Natural killer cell (primary cell): ENCODE measurements at regions of chr1 and their contacts with region 1.

Region 1: DNA sequence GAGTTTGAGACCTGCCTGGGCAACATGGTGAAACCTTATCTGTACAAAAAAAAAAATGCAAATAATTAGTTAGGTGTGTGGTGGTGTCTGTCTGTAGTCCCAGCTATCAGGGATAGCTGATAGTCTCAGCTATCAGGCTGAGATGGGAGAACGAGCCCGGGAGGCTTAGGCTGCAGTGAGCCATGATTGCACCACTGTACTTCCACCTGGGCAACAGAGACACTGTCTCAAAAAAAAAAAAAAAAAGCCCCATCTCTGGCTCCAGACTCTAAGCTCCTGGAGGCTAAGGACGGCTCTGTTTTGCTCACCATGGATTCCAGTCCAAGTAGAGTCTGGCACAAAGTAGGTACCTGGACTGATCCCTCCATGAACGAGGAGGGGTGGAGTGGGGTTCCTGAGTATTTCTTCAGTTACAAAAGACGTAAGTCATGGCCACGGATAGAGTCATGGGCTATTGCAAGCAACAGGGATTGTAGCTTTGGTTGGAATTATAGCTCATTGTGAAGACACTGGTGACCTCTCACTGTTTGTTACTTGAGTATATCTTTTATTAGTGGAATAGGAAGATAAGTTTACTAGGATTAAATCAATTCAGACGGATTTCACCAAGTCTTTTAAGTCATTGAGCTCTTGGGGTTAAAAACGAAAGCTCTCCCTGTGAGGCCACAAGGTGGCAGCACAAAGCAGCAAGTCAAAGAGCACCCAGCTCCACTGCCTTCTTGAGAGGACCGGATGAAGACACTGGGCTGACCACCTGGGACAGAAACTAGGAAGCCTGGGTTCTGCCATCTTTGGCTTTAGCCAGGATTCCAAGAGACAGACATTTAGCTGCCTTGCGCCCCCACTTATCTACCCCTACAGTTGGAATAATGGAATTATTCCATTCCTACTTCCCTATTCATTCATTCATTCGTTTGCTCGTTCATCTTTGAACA is 35.6 kb upstream of the TMEM61 start:
- DNase-seq: peak; percentile 59 to 83
- ATAC-seq: peak; percentile 86 to 95 (median 93)
- H3K4me3 ChIP-seq: no peak overlapping the region
- H3K4me3 Mint-ChIP-seq: no peak overlapping the region
- H3K27ac ChIP-seq: no peak overlapping the region
- H3K27ac Mint-ChIP-seq: no peak overlapping the region
- H3K4me1 ChIP-seq: peaks cover 6% of the 10 kb centered on the region
- H3K4me1 Mint-ChIP-seq: peaks cover 7 to 10% of the 10 kb centered on the region in 2 donors
- H3K27me3 ChIP-seq: no peaks in the 10 kb centered on the region
- H3K27me3 Mint-ChIP-seq: peaks cover 0 to 6% of the 10 kb centered on the region in 2 donors
- CTCF ChIP-seq: peak; percentile 87

Region 2: DNA sequence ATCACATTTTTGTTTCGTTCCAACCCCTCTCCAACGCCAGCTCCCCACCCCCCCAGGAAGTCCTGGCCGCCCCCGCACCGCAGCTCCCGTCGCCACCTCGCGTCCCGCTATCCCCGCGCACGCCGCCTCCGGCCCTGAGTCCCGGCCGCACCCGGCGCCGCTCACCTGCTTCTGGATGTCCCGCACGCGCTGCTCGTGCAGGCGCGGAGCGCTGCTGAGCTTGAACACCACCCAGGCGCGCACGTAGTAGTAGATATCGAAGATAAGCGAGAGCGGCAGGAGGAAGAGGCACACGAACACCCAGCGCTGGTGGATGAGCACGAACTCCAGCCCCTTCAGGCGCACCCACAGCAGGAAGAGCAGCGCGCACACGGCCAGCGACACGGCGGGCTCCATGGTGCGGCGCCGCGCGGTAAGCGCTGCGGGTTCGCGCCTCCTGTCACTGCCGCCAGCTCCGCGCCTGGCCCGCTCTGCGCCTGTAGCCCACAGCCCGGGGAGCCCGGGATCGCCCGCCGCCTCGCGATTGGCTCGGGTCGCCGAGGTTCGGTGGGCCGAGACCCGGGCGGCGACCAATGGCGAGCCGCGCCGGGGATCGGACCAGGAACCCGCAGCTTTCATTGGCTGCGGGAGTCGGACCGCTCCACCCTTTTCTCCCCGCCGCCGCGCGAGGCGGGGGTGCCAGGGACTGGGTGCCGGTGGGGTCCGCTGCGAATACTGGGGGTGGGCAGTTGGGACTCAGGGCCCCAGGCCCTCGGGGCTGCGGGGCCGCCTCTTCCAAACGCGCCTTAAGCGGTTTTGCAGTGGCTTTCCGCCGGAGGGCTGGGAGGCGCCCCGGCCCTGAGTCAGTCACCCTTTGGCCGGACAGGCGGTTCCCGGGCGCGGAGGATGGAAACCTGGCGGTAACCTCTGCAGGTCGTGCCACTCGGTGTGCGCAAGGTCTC is 57.9 kb before region 1 on chr1 and contains the start of gene DHCR24:
- intact Hi-C with region 1: no loop called
- DNase-seq: peak; percentile 75 to 79
- ATAC-seq: peak; percentile 89 to 95 (median 94)
- H3K4me3 ChIP-seq: peak within 1 kb of the TSS; percentile 75
- H3K4me3 Mint-ChIP-seq: peak within 1 kb of the TSS; percentile 94
- H3K27ac ChIP-seq: peak within 1 kb of the TSS; percentile 30
- H3K27ac Mint-ChIP-seq: peak within 1 kb of the TSS; percentile 62 to 68
- H3K4me1 ChIP-seq: peaks cover 20% of the 10 kb centered on the region
- H3K4me1 Mint-ChIP-seq: peaks cover 51 to 57% of the 10 kb centered on the region in 2 donors
- H3K27me3 ChIP-seq: peaks cover 2% of the 10 kb centered on the region
- H3K27me3 Mint-ChIP-seq: peaks cover 7 to 9% of the 10 kb centered on the region in 2 donors
- CTCF ChIP-seq: no peak
- total RNA-seq, gene DHCR24: 8.7 to 17.2 (median 10.4) TPM

Region 3: GRCh38 chr1:54996359-54996868 is 51.5 kb after region 1 on chr1:
- intact Hi-C with region 1: loop called (anchors 1 kb)
- DNase-seq: peak; percentile 79 to 88
- ATAC-seq: peak; percentile 83 to 86 (median 83)
- H3K4me3 ChIP-seq: no peak overlapping the region
- H3K4me3 Mint-ChIP-seq: peak overlapping the region; percentile 62
- H3K27ac ChIP-seq: no peak overlapping the region
- H3K27ac Mint-ChIP-seq: peak overlapping the region; percentile 52 to 74
- H3K4me1 ChIP-seq: peaks cover 21% of the 10 kb centered on the region
- H3K4me1 Mint-ChIP-seq: peaks cover 20 to 23% of the 10 kb centered on the region in 2 donors
- H3K27me3 ChIP-seq: peaks cover 15% of the 10 kb centered on the region
- H3K27me3 Mint-ChIP-seq: peaks cover 24 to 26% of the 10 kb centered on the region in 2 donors
- CTCF ChIP-seq: peak; percentile 74

Region 4: GRCh38 chr1:55021965-55022546 is 77.2 kb after region 1 on chr1:
- intact Hi-C with region 1: loop called (anchors 2 kb)
- DNase-seq: peak; percentile 58 to 73
- ATAC-seq: peak; percentile 89 to 100 (median 92)
- H3K4me3 ChIP-seq: no peak overlapping the region
- H3K4me3 Mint-ChIP-seq: no peak overlapping the region
- H3K27ac ChIP-seq: no peak overlapping the region
- H3K27ac Mint-ChIP-seq: no peak overlapping the region
- H3K4me1 ChIP-seq: no peaks in the 10 kb centered on the region
- H3K4me1 Mint-ChIP-seq: peaks cover 5 to 11% of the 10 kb centered on the region in 2 donors
- H3K27me3 ChIP-seq: no peaks in the 10 kb centered on the region
- H3K27me3 Mint-ChIP-seq: peaks cover 4 to 10% of the 10 kb centered on the region in 2 donors
- CTCF ChIP-seq: peak; percentile 68

Region 5: DNA sequence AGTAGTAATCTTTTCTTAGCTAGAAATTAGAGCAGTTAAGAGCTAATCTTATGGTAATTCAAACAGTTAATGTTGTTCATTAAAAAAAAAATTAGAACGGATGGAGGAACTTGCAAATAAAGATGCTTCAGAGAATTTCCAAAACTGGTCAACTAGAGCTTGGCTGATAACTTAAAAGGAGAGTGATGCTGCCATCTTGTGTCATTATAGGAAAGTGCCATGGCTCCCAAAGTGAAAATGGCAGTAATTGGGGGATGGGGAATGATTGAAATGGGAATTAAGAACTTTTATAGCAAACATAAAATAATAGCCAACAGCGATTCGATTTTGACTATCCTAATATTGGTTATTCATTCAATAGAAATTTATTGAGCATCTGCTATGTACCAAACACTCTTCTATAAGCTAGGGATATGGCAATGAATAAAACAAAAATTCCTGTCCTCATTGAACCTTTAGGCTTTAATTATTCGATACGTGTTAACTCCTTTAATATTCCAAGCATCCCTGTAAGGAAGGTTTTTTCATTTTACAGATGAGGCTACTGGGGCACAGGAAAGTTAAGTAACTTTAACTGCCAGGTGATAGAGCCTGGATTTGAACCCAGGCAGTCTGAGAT is 1640.1 kb after region 1 on chr1:
- intact Hi-C with region 1: loop called (anchors 10 kb)
- DNase-seq: peak in 1 of 2 donors; percentile 6
- ATAC-seq: no peak
- H3K4me3 ChIP-seq: no peak overlapping the region
- H3K4me3 Mint-ChIP-seq: no peak overlapping the region
- H3K27ac ChIP-seq: no peak overlapping the region
- H3K27ac Mint-ChIP-seq: no peak overlapping the region
- H3K4me1 ChIP-seq: no peaks in the 10 kb centered on the region
- H3K4me1 Mint-ChIP-seq: no peaks in the 10 kb centered on the region
- H3K27me3 ChIP-seq: no peaks in the 10 kb centered on the region
- H3K27me3 Mint-ChIP-seq: peaks cover 7 to 14% of the 10 kb centered on the region in 2 donors
- CTCF ChIP-seq: no peak